Endothelial cell of umbilical vein (primary cell): ENCODE measurements at regions of chr18 and their contacts with region 1.

Region 1: GRCh38 chr18:48951448-48952286 is 902 bp upstream of the SMAD7 start:
- DNase-seq: peak; percentile 91
- H3K4me3 ChIP-seq: peak overlapping the region; percentile 58 to 83 (median 79)
- H3K27ac ChIP-seq: peak overlapping the region; percentile 97
- H3K4me1 ChIP-seq: peaks cover 47% of the 10 kb centered on the region
- H3K27me3 ChIP-seq: no peaks in the 10 kb centered on the region
- CTCF ChIP-seq: peak in 1 of 2 donors; percentile 28
- POLR2A ChIP-seq: peak; percentile 49

Region 2: DNA sequence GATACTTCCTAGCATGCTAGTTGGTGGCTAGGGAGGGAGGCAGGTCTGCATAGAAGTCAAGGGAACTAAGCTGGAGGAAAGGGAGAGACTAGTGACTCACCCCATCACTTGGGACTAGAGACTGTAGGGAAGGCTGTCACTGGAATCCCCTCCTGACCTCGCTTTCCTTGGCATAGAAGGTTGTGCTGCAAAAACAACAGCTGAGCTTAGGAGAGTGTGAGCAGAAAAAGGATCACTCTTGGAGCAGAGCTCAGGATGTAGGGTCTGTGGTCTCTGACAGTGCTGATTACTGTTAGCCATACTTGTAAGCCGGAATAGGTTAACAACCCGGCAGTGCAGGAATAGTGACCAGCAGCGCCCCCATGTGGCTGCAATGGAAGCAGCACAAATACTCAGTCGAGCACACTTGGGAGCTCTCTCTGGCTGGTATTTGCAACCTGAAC is 954.3 kb before region 1 on chr18:
- CTCF ChIA-PET with region 1: no interaction called
- POLR2A ChIA-PET with region 1: no interaction called
- dilution Hi-C with region 1: no loop called
- intact Hi-C with region 1: no loop called
- DNase-seq: no peak
- H3K4me3 ChIP-seq: no peak overlapping the region
- H3K27ac ChIP-seq: no peak overlapping the region
- H3K4me1 ChIP-seq: no peaks in the 10 kb centered on the region
- H3K27me3 ChIP-seq: peaks cover 0 to 2% of the 10 kb centered on the region in 2 experiments
- CTCF ChIP-seq: peak in 1 of 2 donors; percentile 60
- POLR2A ChIP-seq: no peak

Region 3: DNA sequence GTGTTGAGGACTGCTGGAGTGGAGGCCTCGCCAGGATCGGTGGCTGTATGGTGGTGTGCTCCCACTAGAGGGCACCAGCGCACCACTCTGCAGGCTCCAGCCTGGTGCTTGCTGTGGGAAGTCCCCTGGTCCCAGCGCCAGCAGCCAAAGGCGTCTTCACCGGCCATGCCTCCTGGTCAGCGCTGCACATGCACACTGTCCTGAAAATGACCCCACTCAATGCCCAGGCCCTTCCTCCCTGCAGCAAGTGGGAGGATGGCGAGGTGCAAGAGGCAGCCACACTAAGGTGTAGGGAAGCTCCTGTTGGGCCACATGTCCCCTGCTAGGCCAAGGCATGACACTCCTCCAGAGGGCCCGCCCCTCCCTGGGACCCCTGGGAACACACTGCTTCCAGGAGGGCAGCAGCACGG is 276.3 kb before region 1 on chr18:
- CTCF ChIA-PET with region 1: interaction called, 3 read pairs
- POLR2A ChIA-PET with region 1: no interaction called
- dilution Hi-C with region 1: no loop called
- intact Hi-C with region 1: loop called (anchors 2 kb)
- DNase-seq: peak; percentile 82
- H3K4me3 ChIP-seq: no peak overlapping the region
- H3K27ac ChIP-seq: no peak overlapping the region
- H3K4me1 ChIP-seq: peaks cover 6% of the 10 kb centered on the region
- H3K27me3 ChIP-seq: no peaks in the 10 kb centered on the region
- CTCF ChIP-seq: peak; percentile 90 to 96
- POLR2A ChIP-seq: no peak

Region 4: DNA sequence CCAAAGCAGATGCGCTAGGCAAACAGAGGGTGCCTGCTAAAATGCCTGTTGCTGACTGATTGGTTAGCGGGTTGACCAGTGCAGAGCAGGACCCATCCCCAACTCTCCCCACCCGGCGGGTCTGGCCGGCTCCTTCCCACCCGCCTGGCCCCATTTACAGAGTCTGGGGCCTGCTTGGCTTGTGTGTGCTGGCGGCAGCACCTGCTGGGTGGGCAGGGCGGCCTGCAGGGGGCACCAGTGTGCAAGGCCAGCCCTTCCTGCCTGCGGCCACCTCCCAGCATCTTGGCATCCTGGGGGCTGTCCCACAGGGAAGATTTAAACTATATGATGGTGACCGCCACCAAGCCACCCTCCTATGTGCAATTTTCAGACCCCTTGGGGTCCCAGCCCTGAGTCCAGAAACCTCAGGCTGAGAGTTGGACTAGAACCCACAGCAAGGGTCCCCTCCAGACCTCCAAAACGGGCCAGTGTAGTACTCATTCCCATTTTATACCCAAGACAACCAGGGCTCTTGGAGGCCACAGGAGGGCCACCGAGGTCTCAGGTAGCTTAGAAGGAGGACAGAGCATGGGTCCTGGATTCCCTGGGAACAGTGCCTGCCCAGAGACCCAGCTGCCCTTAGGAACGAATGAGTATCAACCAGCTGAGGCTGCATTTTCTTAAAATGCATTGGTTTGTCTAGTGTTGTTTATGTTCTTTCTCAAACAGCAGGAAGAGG is 174.5 kb before region 1 on chr18:
- CTCF ChIA-PET with region 1: interaction called, 22 read pairs
- POLR2A ChIA-PET with region 1: no interaction called
- dilution Hi-C with region 1: no loop called
- intact Hi-C with region 1: loop called (anchors 1 kb)
- DNase-seq: peak; percentile 46
- H3K4me3 ChIP-seq: no peak overlapping the region
- H3K27ac ChIP-seq: no peak overlapping the region
- H3K4me1 ChIP-seq: peaks cover 22% of the 10 kb centered on the region
- H3K27me3 ChIP-seq: no peaks in the 10 kb centered on the region
- CTCF ChIP-seq: peak; percentile 93 to 95
- POLR2A ChIP-seq: no peak

Region 5: GRCh38 chr18:48913201-48913600 is 38.5 kb before region 1 on chr18:
- CTCF ChIA-PET with region 1: no interaction called
- POLR2A ChIA-PET with region 1: no interaction called
- dilution Hi-C with region 1: no loop called
- intact Hi-C with region 1: no loop called
- DNase-seq: no peak
- H3K4me3 ChIP-seq: no peak overlapping the region
- H3K27ac ChIP-seq: no peak overlapping the region
- H3K4me1 ChIP-seq: no peaks in the 10 kb centered on the region
- H3K27me3 ChIP-seq: no peaks in the 10 kb centered on the region
- CTCF ChIP-seq: no peak
- POLR2A ChIP-seq: no peak

Region 6: GRCh38 chr18:48928787-48929186 is 22.9 kb before region 1 on chr18:
- CTCF ChIA-PET with region 1: interaction called, 8 read pairs
- POLR2A ChIA-PET with region 1: no interaction called
- dilution Hi-C with region 1: no loop called
- intact Hi-C with region 1: loop called (anchors 1 kb)
- DNase-seq: peak; percentile 83
- H3K4me3 ChIP-seq: no peak overlapping the region
- H3K27ac ChIP-seq: peak overlapping the region; percentile 86
- H3K4me1 ChIP-seq: peaks cover 81% of the 10 kb centered on the region
- H3K27me3 ChIP-seq: no peaks in the 10 kb centered on the region
- CTCF ChIP-seq: no peak
- POLR2A ChIP-seq: peak; percentile 58

Region 7: DNA sequence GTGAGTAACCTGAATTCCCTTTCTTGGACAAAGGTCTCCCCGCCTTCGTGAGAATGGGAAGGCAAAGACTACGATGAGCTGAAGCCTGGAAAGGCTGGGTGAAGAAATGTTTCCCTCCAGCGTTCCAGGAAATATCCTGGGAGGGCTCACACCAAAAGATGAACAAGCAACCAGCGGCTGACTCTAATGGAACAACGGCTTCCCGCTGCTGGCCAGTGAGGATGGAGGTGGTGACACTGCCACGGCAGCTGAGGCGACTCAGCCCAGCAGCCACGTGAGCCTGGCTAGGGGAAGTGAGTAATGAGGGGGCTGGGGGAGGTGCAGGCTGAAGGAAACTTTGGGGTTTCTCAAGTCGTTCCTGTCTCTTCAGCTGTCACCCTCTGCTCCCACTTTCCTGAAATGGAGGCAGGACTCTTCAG is 104.1 kb after region 1 on chr18:
- CTCF ChIA-PET with region 1: no interaction called
- POLR2A ChIA-PET with region 1: no interaction called
- dilution Hi-C with region 1: no loop called
- intact Hi-C with region 1: loop called (anchors 5 kb)
- DNase-seq: peak; percentile 36
- H3K4me3 ChIP-seq: no peak overlapping the region
- H3K27ac ChIP-seq: peak overlapping the region; percentile 31
- H3K4me1 ChIP-seq: peaks cover 5% of the 10 kb centered on the region
- H3K27me3 ChIP-seq: no peaks in the 10 kb centered on the region
- CTCF ChIP-seq: no peak
- POLR2A ChIP-seq: no peak

Region 8: DNA sequence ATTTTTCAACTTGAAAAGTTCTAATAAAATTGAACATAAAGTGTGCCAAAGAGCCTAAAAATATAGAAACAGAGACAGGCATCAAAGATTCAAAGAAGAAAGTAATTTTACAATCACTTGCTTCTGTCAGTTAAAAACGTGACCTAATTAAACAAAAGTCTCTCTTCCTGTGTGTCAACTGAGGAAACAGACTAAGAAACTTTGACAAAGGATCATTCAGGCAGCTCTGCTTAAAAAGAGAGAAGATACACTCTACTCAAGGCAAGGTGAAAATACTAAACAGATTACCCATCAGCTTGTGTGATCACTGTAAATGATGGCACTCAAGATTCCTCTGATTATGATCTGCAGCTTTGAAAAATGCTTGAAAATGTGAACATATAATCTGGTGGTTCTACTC is 461.0 kb after region 1 on chr18:
- CTCF ChIA-PET with region 1: interaction called, 8 read pairs
- POLR2A ChIA-PET with region 1: no interaction called
- dilution Hi-C with region 1: no loop called
- intact Hi-C with region 1: loop called (anchors 10 kb)
- DNase-seq: peak; percentile 35
- H3K4me3 ChIP-seq: no peak overlapping the region
- H3K27ac ChIP-seq: peak overlapping the region; percentile 56
- H3K4me1 ChIP-seq: peaks cover 18% of the 10 kb centered on the region
- H3K27me3 ChIP-seq: no peaks in the 10 kb centered on the region
- CTCF ChIP-seq: no peak
- POLR2A ChIP-seq: no peak